Ovary (tissue), 10 donors: ENCODE measurements at regions of chr2 and their contacts with region 1.

Region 1: GRCh38 chr2:208654056-208654455 is 247.5 kb downstream of the PTH2R start:
- DNase-seq: no peak
- H3K4me3 ChIP-seq: no peak overlapping the region
- H3K27ac ChIP-seq: no peak overlapping the region
- H3K4me1 ChIP-seq: no peaks in the 10 kb centered on the region
- H3K27me3 ChIP-seq: no peaks in the 10 kb centered on the region
- CTCF ChIP-seq: no peak
- EP300 ChIP-seq: no peak
- POLR2A ChIP-seq: no peak

Region 2: GRCh38 chr2:208250391-208250790 is 403.7 kb before region 1 on chr2:
- intact Hi-C with region 1: no loop called
- DNase-seq: no peak
- H3K4me3 ChIP-seq: no peak overlapping the region
- H3K27ac ChIP-seq: no peak overlapping the region
- H3K4me1 ChIP-seq: peaks cover 7% of the 10 kb centered on the region
- H3K27me3 ChIP-seq: no peaks in the 10 kb centered on the region
- CTCF ChIP-seq: no peak
- EP300 ChIP-seq: no peak
- POLR2A ChIP-seq: no peak

Region 3: DNA sequence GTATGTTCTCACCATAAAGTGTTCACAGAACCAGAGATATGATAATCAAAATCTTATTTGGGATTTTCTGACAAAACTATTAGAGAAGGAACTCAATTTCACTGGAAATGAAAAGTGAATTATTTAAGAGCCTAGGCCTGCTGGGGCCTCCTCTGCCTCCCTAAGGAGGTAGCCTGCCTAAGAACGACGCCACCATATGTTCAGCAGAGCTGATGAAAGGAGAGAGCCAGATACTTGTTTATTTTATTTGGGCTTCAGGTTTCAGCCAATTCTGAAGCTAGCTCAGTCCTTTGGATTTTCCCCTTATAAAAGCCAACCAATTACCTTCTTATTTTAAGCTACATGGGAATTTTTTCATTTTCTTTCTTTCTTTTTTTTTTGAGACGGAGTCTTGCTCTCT is 336.7 kb after region 1 on chr2:
- intact Hi-C with region 1: loop called in 1 of 4 experiments (anchors 5 kb)
- DNase-seq: no peak
- H3K4me3 ChIP-seq: no peak overlapping the region
- H3K27ac ChIP-seq: no peak overlapping the region
- H3K4me1 ChIP-seq: no peaks in the 10 kb centered on the region
- H3K27me3 ChIP-seq: no peaks in the 10 kb centered on the region
- CTCF ChIP-seq: no peak
- EP300 ChIP-seq: no peak
- POLR2A ChIP-seq: no peak